Activated T-helper 1 cell treated with anti-CD3 and anti-CD28 coated beads, Interleukin-12 subunit alpha, Interleukin-12 subunit beta, Interleukin-2, Interleukin-4 antibody, amounts not matched to agents 30 ng/mL and 10 ng/mL and 1 ng/mL, durations not matched to agents 14 hours and 24 hours and 36 hours (primary cell): ENCODE measurements at regions of chr17 and their contacts with region 1.

Region 1: DNA sequence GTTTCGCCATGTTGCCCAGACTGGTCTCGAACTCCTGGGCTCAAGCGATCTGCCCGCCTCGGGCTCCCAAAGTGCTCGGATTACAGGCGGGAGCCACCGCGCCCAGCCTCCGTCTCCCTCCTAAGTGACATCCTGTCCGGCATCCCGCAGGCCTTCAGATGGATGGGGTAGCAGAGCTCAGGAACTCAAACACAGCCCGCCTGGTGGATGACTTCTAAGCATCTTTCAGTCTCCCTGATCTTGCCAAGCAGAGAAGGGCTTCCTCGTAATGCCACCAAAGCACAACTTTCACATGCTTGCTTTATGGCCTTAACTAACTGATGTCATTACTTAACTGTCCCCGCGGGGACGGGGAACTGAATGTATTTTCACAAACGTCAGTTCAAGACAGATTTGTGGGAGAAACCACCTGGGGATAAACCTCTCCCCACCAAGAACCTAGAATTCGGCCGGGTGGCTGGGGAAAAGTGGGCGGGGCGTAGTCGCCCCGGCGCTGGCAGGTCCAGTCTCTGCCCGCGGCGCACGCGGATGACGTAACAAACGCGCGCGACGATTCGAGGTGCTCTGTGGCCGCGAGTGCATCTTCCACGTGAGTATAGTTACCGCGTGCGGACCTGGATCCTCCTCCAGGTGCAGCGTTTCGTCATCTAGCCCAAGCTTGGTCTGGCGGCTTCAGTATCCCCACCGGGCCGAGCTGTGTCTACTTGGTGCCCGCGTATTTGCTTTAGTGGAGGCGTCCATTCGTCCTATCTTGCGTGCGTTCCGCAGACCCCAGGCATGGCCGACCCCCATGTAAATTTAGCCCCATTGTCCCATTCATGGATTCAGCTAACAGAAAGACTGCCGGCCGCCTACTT is at the start of gene PFAS:
- DNase-seq: peak; percentile 95
- H3K4me3 Mint-ChIP-seq: peak within 1 kb of the TSS; percentile 98
- H3K27ac Mint-ChIP-seq: peak within 1 kb of the TSS; percentile 100
- H3K4me1 Mint-ChIP-seq: peaks cover 40% of the 10 kb centered on the region
- H3K27me3 Mint-ChIP-seq: peaks cover 1% of the 10 kb centered on the region
- total RNA-seq, gene PFAS: 189 and 204 TPM in 2 replicates

Region 2: GRCh38 chr17:8209909-8210760 is 38.8 kb before region 1 on chr17 and contains the start of gene AURKB:
- intact Hi-C with region 1: loop called (anchors 5 kb)
- DNase-seq: peak; percentile 91
- H3K4me3 Mint-ChIP-seq: peak within 1 kb of the TSS; percentile 96
- H3K27ac Mint-ChIP-seq: peak within 1 kb of the TSS; percentile 94
- H3K4me1 Mint-ChIP-seq: peaks cover 34% of the 10 kb centered on the region
- H3K27me3 Mint-ChIP-seq: no peaks in the 10 kb centered on the region
- total RNA-seq, gene AURKB: 82.2 and 88.7 TPM in 2 replicates

Region 3: GRCh38 chr17:8288336-8289102 is 39.5 kb after region 1 on chr17 and contains the start of gene RANGRF:
- intact Hi-C with region 1: loop called (anchors 1 kb)
- DNase-seq: peak; percentile 85
- H3K4me3 Mint-ChIP-seq: peak within 1 kb of the TSS; percentile 86
- H3K27ac Mint-ChIP-seq: peak within 1 kb of the TSS; percentile 92
- H3K4me1 Mint-ChIP-seq: peaks cover 37% of the 10 kb centered on the region
- H3K27me3 Mint-ChIP-seq: no peaks in the 10 kb centered on the region
- total RNA-seq, gene RANGRF: 52.9 and 57.9 TPM in 2 replicates

Region 4: DNA sequence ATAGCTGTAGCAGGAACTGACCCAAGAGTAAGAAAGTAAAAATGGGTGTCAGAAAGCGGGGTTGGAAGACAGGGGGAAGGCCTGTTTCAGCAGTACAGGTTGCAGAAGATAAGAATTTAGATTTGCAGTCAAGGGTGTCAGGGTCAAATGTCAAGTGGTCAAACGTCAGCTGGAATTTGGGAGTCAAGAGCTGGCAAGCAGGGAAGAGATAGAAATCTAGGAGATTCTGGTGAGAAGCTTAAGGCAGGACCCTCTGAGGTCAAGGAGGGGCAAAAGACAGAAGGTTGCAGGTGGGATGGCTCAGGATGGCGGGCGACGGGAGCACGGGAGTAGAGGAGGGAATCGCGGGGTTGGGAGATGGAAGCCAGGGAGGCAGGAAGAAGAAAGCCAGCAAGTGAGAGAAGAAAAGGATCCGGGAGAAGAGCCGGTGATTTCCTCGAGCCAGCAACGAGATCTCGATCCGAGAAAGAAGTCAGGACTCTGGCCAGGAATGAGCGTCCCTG is 45.9 kb after region 1 on chr17:
- intact Hi-C with region 1: loop called (anchors 1 kb)
- DNase-seq: no peak
- H3K4me3 Mint-ChIP-seq: peak overlapping the region; percentile 87
- H3K27ac Mint-ChIP-seq: peak overlapping the region; percentile 83
- H3K4me1 Mint-ChIP-seq: peaks cover 42% of the 10 kb centered on the region
- H3K27me3 Mint-ChIP-seq: no peaks in the 10 kb centered on the region